ENCODE measurements at regions of chr15 and their contacts with region 1.

Region 1: DNA sequence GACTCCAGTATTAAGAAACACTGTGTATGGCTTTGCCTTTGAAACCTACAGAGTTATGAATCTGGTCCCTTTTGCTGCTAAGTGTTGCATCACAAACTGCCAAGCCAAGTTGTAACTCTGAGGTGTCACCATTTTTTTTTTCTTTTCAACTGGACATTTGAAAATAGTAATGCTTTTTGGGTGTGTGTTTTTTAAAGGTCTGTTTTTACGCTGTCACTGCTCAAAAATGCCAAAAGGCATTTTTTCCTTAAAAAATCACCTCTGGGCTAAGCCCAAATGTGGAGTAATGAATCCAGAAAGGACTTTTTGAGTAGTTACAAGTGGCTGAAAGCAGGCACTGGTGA is 9.5 kb downstream of the SMAD3 start:
- DNase-seq: no peak
- H3K4me3 ChIP-seq: no peak overlapping the region
- H3K27ac ChIP-seq: no peak overlapping the region
- H3K4me1 ChIP-seq: peaks cover 41% of the 10 kb centered on the region
- H3K27me3 ChIP-seq: no peaks in the 10 kb centered on the region
- CTCF ChIP-seq: no peak

Region 2: DNA sequence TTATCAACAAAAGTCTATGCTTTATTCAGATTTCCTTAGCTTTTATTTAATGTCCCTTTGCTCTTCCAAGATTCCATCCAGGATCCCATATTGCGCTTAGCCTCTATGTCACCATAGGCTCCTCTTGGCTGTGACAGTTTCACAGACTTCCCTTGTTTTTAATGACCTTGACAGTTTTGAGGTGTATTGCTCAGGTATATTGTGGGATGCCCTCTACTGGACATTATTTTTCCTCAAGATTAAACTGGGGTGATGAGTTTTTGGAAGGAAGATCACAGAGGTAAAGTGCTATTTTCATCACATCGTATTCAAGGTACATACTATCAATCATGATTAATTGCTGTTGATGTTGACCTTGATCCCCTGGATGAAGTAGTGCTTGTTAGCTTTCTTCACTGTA is 108.6 kb before region 1 on chr15:
- CTCF ChIA-PET with region 1: no interaction called
- dilution Hi-C with region 1: loop called (anchors 5 kb)
- in situ Hi-C with region 1: no loop called
- intact Hi-C with region 1: no loop called
- DNase-seq: no peak
- H3K4me3 ChIP-seq: no peak overlapping the region
- H3K27ac ChIP-seq: no peak overlapping the region
- H3K4me1 ChIP-seq: no peaks in the 10 kb centered on the region
- H3K27me3 ChIP-seq: no peaks in the 10 kb centered on the region
- CTCF ChIP-seq: peak; percentile 30 to 40

Region 3: GRCh38 chr15:67048281-67049279 is 26.3 kb before region 1 on chr15:
- CTCF ChIA-PET with region 1: no interaction called
- dilution Hi-C with region 1: no loop called
- in situ Hi-C with region 1: no loop called
- intact Hi-C with region 1: no loop called
- DNase-seq: peak; percentile 86
- H3K4me3 ChIP-seq: no peak overlapping the region
- H3K27ac ChIP-seq: peak overlapping the region; percentile 89
- H3K4me1 ChIP-seq: peaks cover 44% of the 10 kb centered on the region
- H3K27me3 ChIP-seq: no peaks in the 10 kb centered on the region
- CTCF ChIP-seq: no peak

Region 4: GRCh38 chr15:67240235-67241131 is 165.6 kb after region 1 on chr15:
- CTCF ChIA-PET with region 1: no interaction called
- dilution Hi-C with region 1: loop called (anchors 5 kb)
- in situ Hi-C with region 1: no loop called
- intact Hi-C with region 1: no loop called
- DNase-seq: peak; percentile 30
- H3K4me3 ChIP-seq: no peak overlapping the region
- H3K27ac ChIP-seq: peak overlapping the region; percentile 46
- H3K4me1 ChIP-seq: peaks cover 16% of the 10 kb centered on the region
- H3K27me3 ChIP-seq: no peaks in the 10 kb centered on the region
- CTCF ChIP-seq: peak; percentile 26 to 62

Measured in mammary epithelial cell (primary cell).